ENCODE measurements at regions of chr18 and their contacts with region 1.

Region 1: DNA sequence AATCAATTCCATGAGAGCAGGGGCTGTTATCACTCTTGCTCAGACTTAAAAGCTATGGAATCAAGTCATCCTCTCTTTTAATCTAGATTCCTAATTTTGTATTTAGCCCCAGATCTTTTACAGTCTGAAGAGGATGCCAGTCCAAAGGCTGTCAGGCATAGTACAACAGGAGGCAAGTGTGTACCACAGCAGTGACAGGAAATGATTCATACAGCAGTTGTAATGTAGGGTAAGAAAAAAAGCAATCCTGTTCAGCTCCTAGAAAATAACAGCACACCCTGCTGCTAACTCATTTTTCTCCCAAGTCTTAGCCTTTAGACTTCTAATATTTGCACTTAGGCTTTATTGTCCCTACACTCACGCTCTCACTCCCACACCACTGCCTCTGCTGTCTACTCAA is 127.8 kb upstream of the SYT4 start:
- DNase-seq: no peak
- ATAC-seq: no peak
- H3K4me3 ChIP-seq: no peak overlapping the region
- H3K27ac ChIP-seq: no peak overlapping the region
- H3K4me1 ChIP-seq: no peaks in the 10 kb centered on the region
- H3K27me3 ChIP-seq: no peaks in the 10 kb centered on the region
- CTCF ChIP-seq: no peak
- POLR2A ChIP-seq: no peak

Region 2: DNA sequence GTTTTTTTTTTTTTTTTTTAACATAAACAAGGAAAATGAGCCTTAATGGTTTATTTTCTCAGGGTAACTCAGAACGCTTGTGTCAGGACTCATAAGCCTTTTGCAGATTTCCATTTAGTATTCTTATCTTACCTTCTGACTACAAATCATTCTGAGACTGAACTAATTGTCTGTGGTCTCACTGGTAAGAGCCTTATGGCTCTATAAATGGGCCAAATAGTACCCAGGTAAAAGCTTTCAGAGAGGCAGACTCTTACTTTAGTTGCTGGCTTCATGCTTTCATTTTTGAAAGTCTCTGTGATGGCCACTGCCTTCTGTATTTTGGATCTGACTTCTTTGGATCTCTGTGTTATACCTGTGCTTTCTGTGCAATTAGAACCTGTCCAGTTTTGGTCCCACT is 693.0 kb before region 1 on chr18:
- intact Hi-C with region 1: no loop called
- DNase-seq: no peak
- ATAC-seq: no peak
- H3K4me3 ChIP-seq: no peak overlapping the region
- H3K27ac ChIP-seq: no peak overlapping the region
- H3K4me1 ChIP-seq: no peaks in the 10 kb centered on the region
- H3K27me3 ChIP-seq: no peaks in the 10 kb centered on the region
- CTCF ChIP-seq: no peak
- POLR2A ChIP-seq: no peak

Region 3: DNA sequence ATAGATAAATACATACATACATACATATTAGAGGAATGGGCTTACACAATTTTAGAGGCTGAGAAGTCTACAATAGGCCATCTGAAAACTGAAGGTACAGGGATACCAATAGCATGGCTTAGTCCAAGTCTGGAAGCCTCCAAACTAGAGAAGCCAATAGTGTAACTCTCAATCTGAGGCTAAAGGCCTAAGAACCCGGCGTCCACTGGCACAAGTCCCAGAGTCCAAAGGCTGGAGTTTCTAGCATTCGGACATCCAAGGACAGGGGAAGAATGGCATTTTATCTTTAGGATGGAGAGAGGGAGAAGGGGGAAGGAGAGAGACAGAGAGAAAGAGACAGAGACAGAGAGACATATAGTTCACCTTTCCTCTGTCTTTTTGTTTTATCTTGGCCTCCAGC is 64.1 kb before region 1 on chr18:
- intact Hi-C with region 1: loop called in 1 of 10 experiments (anchors 10 kb)
- DNase-seq: no peak
- ATAC-seq: no peak
- H3K4me3 ChIP-seq: no peak overlapping the region
- H3K27ac ChIP-seq: no peak overlapping the region
- H3K4me1 ChIP-seq: no peaks in the 10 kb centered on the region
- H3K27me3 ChIP-seq: no peaks in the 10 kb centered on the region
- CTCF ChIP-seq: no peak
- POLR2A ChIP-seq: no peak

Region 4: DNA sequence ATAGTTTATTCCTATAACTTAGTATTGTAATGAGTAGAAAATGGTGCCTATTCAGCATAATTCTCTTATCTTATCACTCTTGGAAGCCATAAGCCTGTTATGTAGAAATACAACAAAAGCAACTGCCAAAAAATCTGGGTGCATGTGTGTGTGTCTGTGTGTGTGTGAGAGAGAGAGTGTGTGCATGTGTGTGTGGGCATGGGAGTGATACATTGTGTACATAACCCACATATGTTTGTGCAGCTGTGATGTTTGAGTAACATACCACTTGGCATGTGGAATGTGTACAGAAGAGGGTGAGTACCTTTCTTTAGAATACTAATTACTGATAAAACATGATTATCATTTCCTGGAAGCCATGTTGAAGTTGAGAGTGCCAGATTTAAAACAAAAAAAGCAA is 514.5 kb after region 1 on chr18:
- intact Hi-C with region 1: no loop called
- DNase-seq: no peak
- ATAC-seq: peak in 1 of 4 donors; percentile 39
- H3K4me3 ChIP-seq: no peak overlapping the region
- H3K27ac ChIP-seq: no peak overlapping the region
- H3K4me1 ChIP-seq: no peaks in the 10 kb centered on the region
- H3K27me3 ChIP-seq: no peaks in the 10 kb centered on the region
- CTCF ChIP-seq: no peak
- POLR2A ChIP-seq: no peak